WTC11 (cell line): ENCODE measurements at regions of chr2 and their contacts with region 1.

Region 1: DNA sequence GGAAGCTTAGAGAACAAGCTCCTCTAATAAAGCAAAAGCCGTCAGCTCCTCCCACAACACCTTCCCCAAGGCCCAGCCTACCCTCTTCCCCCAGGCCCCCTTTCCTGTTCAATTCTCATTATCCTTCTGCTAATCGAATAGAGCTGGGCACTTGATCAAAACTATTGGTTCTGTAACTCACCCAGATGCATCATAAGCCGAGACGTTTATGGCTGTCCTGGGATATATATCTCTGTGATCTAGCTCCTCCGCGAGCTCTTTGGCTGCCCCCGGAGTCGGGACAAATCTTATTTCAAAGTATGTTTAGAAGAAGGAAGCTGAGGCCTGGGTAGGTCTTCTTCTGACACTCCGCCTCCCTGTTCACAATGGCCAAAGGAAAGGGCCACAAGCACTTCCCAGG is 88.3 kb upstream of the KLHL29 start:
- DNase-seq: no peak
- ATAC-seq: no peak
- H3K4me3 Mint-ChIP-seq: no peak overlapping the region
- H3K27ac Mint-ChIP-seq: no peak overlapping the region
- H3K4me1 Mint-ChIP-seq: 0 out of 2 replicates have a peak, but pooled peaks cover 4% of the 10 kb centered on the region
- H3K27me3 Mint-ChIP-seq: peaks cover 2% of the 10 kb centered on the region; the same call in 1 of the 2 replicates
- CTCF ChIP-seq: no peak

Region 2: GRCh38 chr2:23260621-23261020 is 36.1 kb before region 1 on chr2:
- CTCF ChIA-PET with region 1: no interaction called
- POLR2A ChIA-PET with region 1: no interaction called
- DNase-seq: no peak
- ATAC-seq: no peak
- H3K4me3 Mint-ChIP-seq: no peak overlapping the region
- H3K27ac Mint-ChIP-seq: no peak overlapping the region
- H3K4me1 Mint-ChIP-seq: no peaks in the 10 kb centered on the region
- H3K27me3 Mint-ChIP-seq: no peaks in the 10 kb centered on the region
- CTCF ChIP-seq: no peak

Region 3: DNA sequence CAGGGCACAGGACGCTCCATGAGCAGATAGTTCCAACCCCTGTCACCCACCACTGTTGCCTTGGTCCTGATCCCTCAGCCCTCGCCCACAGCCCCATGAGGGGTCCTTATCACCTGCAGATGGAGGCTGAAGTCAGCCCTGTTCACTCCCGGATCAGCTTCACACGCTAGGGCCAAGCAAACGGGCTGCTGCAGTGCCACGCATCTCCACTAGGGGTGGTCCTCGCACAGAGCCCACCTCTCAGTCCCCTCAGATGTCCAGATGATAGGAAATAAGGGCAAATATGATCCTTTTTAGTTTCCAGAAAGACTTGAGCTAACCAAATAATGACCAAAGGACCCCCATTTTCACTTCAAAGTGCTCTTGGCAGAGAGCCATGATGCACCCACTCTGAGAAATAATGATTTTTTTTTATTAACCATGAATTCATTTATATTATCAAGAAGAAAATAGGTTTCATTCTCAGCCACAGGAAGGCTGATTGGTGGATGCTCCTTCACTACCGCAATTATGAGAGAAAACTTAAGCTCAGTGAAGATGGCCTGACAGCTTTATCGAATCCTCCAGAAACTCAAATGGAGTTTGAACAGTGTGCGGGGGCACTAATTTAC is 16.4 kb after region 1 on chr2:
- CTCF ChIA-PET with region 1: interaction called, 14 read pairs
- POLR2A ChIA-PET with region 1: no interaction called
- DNase-seq: peak; percentile 85
- ATAC-seq: peak; percentile 99
- H3K4me3 Mint-ChIP-seq: no peak overlapping the region
- H3K27ac Mint-ChIP-seq: no peak overlapping the region
- H3K4me1 Mint-ChIP-seq: no peaks in the 10 kb centered on the region
- H3K27me3 Mint-ChIP-seq: no peaks in the 10 kb centered on the region; the same call in none of the 2 replicates
- CTCF ChIP-seq: peak; percentile 97